SK-N-SH (cell line): ENCODE measurements at regions of chr17 and their contacts with region 1.

Region 1: DNA sequence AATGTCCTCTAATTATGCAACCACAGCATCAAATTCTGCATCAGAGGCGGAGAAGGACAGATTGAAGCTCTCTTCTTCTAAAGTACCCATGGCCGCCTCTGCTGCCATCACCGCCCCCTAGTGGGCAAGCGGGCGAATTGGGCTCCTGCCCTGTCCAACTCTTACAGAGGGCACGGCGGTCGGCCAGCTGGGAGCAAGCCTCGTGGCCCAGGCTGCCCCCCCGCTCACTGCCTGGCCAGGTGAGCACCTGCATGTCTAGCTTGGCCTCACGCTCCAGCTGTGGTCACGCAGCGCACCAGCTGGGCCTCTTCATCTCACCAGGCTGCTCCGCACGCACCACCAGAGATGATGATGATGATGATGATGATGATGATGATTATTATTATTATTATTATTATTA is 146.1 kb upstream of the TOM1L1 start:
- DNase-seq: peak; percentile 34
- H3K4me3 ChIP-seq: no peak overlapping the region
- H3K27ac ChIP-seq: no peak overlapping the region
- H3K4me1 ChIP-seq: no peaks in the 10 kb centered on the region
- H3K27me3 ChIP-seq: no peaks in the 10 kb centered on the region
- CTCF ChIP-seq: peak; percentile 26
- EP300 ChIP-seq: no peak
- RAD21 ChIP-seq: no peak

Region 2: GRCh38 chr17:54742745-54743144 is 11.8 kb before region 1 on chr17:
- CTCF ChIA-PET with region 1: interaction called, 14 read pairs
- POLR2A ChIA-PET with region 1: no interaction called
- DNase-seq: no peak
- H3K4me3 ChIP-seq: no peak overlapping the region
- H3K27ac ChIP-seq: no peak overlapping the region
- H3K4me1 ChIP-seq: no peaks in the 10 kb centered on the region
- H3K27me3 ChIP-seq: no peaks in the 10 kb centered on the region
- CTCF ChIP-seq: no peak
- EP300 ChIP-seq: no peak
- RAD21 ChIP-seq: no peak

Region 3: GRCh38 chr17:54771409-54771808 is 16.8 kb after region 1 on chr17:
- CTCF ChIA-PET with region 1: interaction called, 13 read pairs
- POLR2A ChIA-PET with region 1: no interaction called
- DNase-seq: no peak
- H3K4me3 ChIP-seq: no peak overlapping the region
- H3K27ac ChIP-seq: no peak overlapping the region
- H3K4me1 ChIP-seq: no peaks in the 10 kb centered on the region
- H3K27me3 ChIP-seq: no peaks in the 10 kb centered on the region
- CTCF ChIP-seq: no peak
- EP300 ChIP-seq: no peak
- RAD21 ChIP-seq: no peak

Region 4: GRCh38 chr17:54859187-54859586 is 104.6 kb after region 1 on chr17:
- CTCF ChIA-PET with region 1: no interaction called
- POLR2A ChIA-PET with region 1: no interaction called
- DNase-seq: no peak
- H3K4me3 ChIP-seq: no peak overlapping the region
- H3K27ac ChIP-seq: peak overlapping the region in 1 of 2 experiments; percentile 95; a peak in 2 of 4 replicates
- H3K4me1 ChIP-seq: peaks cover 0 to 27% of the 10 kb centered on the region in 2 experiments; a peak in 2 of 4 replicates
- H3K27me3 ChIP-seq: no peaks in the 10 kb centered on the region
- CTCF ChIP-seq: no peak
- EP300 ChIP-seq: no peak
- RAD21 ChIP-seq: no peak